K562 (cell line): ENCODE measurements at regions of chr3 and their contacts with region 1.

Region 1: DNA sequence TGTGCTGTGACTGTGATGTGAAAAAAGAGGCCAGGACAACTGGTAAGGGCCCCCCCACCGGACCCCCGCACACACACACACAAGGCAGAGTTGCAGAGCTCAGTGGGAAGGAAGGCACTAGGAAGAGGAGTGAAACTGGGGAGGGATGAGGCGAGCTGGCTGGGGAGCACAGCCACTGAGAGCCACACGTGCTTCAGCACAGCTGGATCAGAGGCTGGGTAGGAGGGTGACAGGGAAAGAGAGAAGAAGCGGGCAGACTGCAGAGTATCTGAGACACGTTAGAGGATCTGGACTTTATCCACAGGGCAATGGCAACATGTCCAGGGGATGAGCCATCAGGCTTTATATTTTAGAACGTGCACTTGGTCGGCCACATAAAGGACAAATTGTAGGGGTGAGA is 38.0 kb upstream of the TKT start:
- DNase-seq: no peak
- ATAC-seq: no peak
- H3K4me3 ChIP-seq: no peak overlapping the region
- H3K27ac ChIP-seq: no peak overlapping the region
- H3K4me1 ChIP-seq: no peaks in the 10 kb centered on the region
- H3K27me3 ChIP-seq: no peaks in the 10 kb centered on the region
- CTCF ChIP-seq: no peak
- EP300 ChIP-seq: no peak
- POLR2A ChIP-seq: no peak
- RAD21 ChIP-seq: no peak

Region 2: GRCh38 chr3:53150247-53151085 is 143.4 kb before region 1 on chr3:
- CTCF ChIA-PET with region 1: no interaction called
- POLR2A ChIA-PET with region 1: no interaction called
- in situ Hi-C with region 1: no loop called
- intact Hi-C with region 1: no loop called
- DNase-seq: no peak
- ATAC-seq: no peak
- H3K4me3 ChIP-seq: no peak overlapping the region
- H3K27ac ChIP-seq: no peak overlapping the region
- H3K4me1 ChIP-seq: peaks cover 0 to 8% of the 10 kb centered on the region in 2 experiments; a peak in 2 of 5 replicates
- H3K27me3 ChIP-seq: peaks cover 0 to 5% of the 10 kb centered on the region in 2 experiments; a peak in 1 of 5 replicates
- CTCF ChIP-seq: no peak
- EP300 ChIP-seq: no peak
- POLR2A ChIP-seq: no peak
- RAD21 ChIP-seq: no peak

Region 3: GRCh38 chr3:53375019-53375418 is 81.2 kb after region 1 on chr3:
- CTCF ChIA-PET with region 1: no interaction called
- POLR2A ChIA-PET with region 1: no interaction called
- in situ Hi-C with region 1: no loop called
- intact Hi-C with region 1: loop called (anchors 5 kb)
- DNase-seq: peak; percentile 56 to 77 (median 68)
- ATAC-seq: peak; percentile 98
- H3K4me3 ChIP-seq: no peak overlapping the region
- H3K27ac ChIP-seq: no peak overlapping the region
- H3K4me1 ChIP-seq: peaks cover 0 to 3% of the 10 kb centered on the region in 2 experiments; a peak in 2 of 5 replicates
- H3K27me3 ChIP-seq: no peaks in the 10 kb centered on the region; a peak in 2 of 5 replicates
- CTCF ChIP-seq: peak; percentile 74 to 82 (median 77)
- EP300 ChIP-seq: no peak
- POLR2A ChIP-seq: no peak
- RAD21 ChIP-seq: peak; percentile 51 to 79